Mammary epithelial cell (primary cell): ENCODE measurements at regions of chr3 and their contacts with region 1.

Region 1: DNA sequence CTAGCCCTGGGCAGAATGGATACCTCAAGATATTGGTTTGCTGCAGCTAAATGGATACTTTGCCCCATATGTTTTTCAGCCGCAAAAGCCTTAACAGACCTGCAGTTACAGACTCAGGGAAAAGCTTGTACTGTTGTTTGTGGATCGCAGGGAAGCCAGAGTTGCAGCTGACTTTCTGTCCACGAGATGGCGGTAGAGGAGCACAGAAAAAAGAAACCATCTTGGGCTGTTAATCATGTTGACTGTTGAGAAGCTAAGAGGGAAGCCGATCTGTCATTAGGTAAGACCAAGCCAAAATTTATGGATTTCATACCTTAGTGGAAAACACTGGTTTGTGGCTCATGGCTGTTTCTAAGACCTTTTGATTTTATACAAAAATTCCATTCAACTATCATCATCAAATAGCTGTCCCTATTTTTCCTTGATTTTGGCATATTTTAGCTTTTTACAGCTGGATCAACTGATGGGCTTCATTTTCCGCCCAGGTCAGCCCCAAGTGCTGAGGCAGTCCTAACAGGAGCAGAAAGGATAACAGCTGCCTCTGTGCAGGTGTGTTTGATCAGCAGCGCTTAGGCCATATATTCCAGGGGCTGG is 205.7 kb upstream of the ZPLD1 start:
- DNase-seq: peak; percentile 71
- H3K4me3 ChIP-seq: no peak overlapping the region
- H3K27ac ChIP-seq: no peak overlapping the region
- H3K4me1 ChIP-seq: peaks cover 2% of the 10 kb centered on the region
- H3K27me3 ChIP-seq: no peaks in the 10 kb centered on the region
- CTCF ChIP-seq: peak; percentile 92 to 97

Region 2: DNA sequence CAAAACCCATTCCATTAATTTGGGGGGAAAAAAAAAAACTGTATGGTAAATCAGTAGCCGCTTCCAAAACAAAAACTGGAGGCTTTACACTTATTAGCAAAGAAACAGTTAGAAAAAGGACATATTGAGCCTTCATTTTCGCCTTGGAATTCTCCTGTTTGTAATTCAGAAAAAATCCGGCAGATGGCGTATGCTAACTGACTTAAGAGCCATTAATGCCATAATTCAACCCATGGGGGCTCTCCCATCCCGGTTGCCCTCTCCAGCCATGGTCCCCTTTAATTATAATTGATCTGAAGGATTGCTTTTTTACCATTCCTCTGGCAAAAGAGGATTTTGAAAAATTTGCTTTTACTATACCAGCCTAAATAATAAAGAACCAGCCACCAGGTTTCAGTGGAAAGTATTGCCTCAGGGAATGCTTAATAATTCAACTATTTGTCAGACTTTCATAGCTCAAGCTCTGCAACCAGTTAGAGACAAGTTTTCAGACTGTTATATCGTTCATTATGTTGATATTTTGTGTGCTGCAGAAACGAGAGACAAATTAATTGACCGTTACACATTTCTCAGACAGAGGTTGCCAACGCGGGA is 533.3 kb before region 1 on chr3:
- CTCF ChIA-PET with region 1: no interaction called
- dilution Hi-C with region 1: no loop called
- in situ Hi-C with region 1: no loop called
- intact Hi-C with region 1: loop called (anchors 2 kb)
- DNase-seq: peak; percentile 38
- H3K4me3 ChIP-seq: no peak overlapping the region
- H3K27ac ChIP-seq: no peak overlapping the region
- H3K4me1 ChIP-seq: no peaks in the 10 kb centered on the region
- H3K27me3 ChIP-seq: no peaks in the 10 kb centered on the region
- CTCF ChIP-seq: peak; percentile 45 to 64

Region 3: GRCh38 chr3:101868534-101869464 is 360.4 kb before region 1 on chr3:
- CTCF ChIA-PET with region 1: interaction called, 8 read pairs
- dilution Hi-C with region 1: no loop called
- in situ Hi-C with region 1: no loop called
- intact Hi-C with region 1: loop called (anchors 1 kb)
- DNase-seq: no peak
- H3K4me3 ChIP-seq: no peak overlapping the region
- H3K27ac ChIP-seq: no peak overlapping the region
- H3K4me1 ChIP-seq: peaks cover 7% of the 10 kb centered on the region
- H3K27me3 ChIP-seq: no peaks in the 10 kb centered on the region
- CTCF ChIP-seq: no peak

Region 4: GRCh38 chr3:101995371-101996046 is 233.7 kb before region 1 on chr3:
- CTCF ChIA-PET with region 1: no interaction called
- dilution Hi-C with region 1: no loop called
- in situ Hi-C with region 1: loop called in 1 of 2 experiments (anchors 10 kb)
- intact Hi-C with region 1: loop called (anchors 5 kb)
- DNase-seq: no peak
- H3K4me3 ChIP-seq: no peak overlapping the region
- H3K27ac ChIP-seq: no peak overlapping the region
- H3K4me1 ChIP-seq: peaks cover 30% of the 10 kb centered on the region
- H3K27me3 ChIP-seq: no peaks in the 10 kb centered on the region
- CTCF ChIP-seq: no peak

Region 5: DNA sequence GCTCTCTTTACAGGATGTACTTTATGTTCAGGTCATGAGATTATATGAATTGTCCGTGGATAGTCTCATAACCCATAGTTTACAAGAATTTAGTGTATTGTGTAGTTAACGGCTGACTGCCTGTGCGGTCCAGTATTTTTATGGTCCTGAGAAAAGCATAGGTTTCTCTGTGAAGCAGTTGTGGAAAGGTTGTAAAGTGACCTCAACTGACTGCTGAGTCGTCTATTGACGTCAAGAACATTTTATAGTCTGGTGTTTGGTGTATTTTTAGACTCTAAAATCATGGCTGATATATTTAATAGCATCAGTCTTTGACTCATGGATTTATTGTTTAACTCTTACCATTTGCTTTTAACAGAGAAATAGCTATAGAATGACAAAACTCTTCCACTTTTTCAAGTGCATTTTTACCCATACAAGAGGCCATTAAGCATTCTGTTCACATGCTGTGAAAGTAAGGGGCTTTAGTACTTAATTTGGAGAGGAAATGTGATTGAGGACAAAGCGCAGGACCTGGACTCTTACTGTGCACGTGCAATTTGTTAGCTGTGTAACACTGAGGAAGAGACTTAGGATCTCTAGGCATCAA is 139.2 kb before region 1 on chr3:
- CTCF ChIA-PET with region 1: no interaction called
- dilution Hi-C with region 1: no loop called
- in situ Hi-C with region 1: no loop called
- intact Hi-C with region 1: no loop called
- DNase-seq: peak; percentile 52
- H3K4me3 ChIP-seq: no peak overlapping the region
- H3K27ac ChIP-seq: no peak overlapping the region
- H3K4me1 ChIP-seq: no peaks in the 10 kb centered on the region
- H3K27me3 ChIP-seq: no peaks in the 10 kb centered on the region
- CTCF ChIP-seq: no peak

Region 6: GRCh38 chr3:102156426-102156825 is 72.7 kb before region 1 on chr3:
- CTCF ChIA-PET with region 1: no interaction called
- dilution Hi-C with region 1: loop called (anchors 5 kb)
- in situ Hi-C with region 1: no loop called
- intact Hi-C with region 1: loop called (anchors 2 kb)
- DNase-seq: peak; percentile 97
- H3K4me3 ChIP-seq: no peak overlapping the region
- H3K27ac ChIP-seq: peak overlapping the region; percentile 100
- H3K4me1 ChIP-seq: peaks cover 24% of the 10 kb centered on the region
- H3K27me3 ChIP-seq: no peaks in the 10 kb centered on the region
- CTCF ChIP-seq: no peak

Region 7: GRCh38 chr3:102529452-102529851 is 300.3 kb after region 1 on chr3:
- CTCF ChIA-PET with region 1: interaction called, 7 read pairs
- dilution Hi-C with region 1: no loop called
- in situ Hi-C with region 1: loop called in 1 of 2 experiments (anchors 5 kb)
- intact Hi-C with region 1: loop called (anchors 1 kb)
- DNase-seq: peak; percentile 15
- H3K4me3 ChIP-seq: no peak overlapping the region
- H3K27ac ChIP-seq: no peak overlapping the region
- H3K4me1 ChIP-seq: peaks cover 9% of the 10 kb centered on the region
- H3K27me3 ChIP-seq: no peaks in the 10 kb centered on the region
- CTCF ChIP-seq: peak; percentile 27 to 57

Region 8: GRCh38 chr3:102741108-102741507 is 511.9 kb after region 1 on chr3:
- CTCF ChIA-PET with region 1: no interaction called
- dilution Hi-C with region 1: no loop called
- in situ Hi-C with region 1: no loop called
- intact Hi-C with region 1: loop called (anchors 2 kb)
- DNase-seq: peak; percentile 0
- H3K4me3 ChIP-seq: no peak overlapping the region
- H3K27ac ChIP-seq: no peak overlapping the region
- H3K4me1 ChIP-seq: no peaks in the 10 kb centered on the region
- H3K27me3 ChIP-seq: no peaks in the 10 kb centered on the region
- CTCF ChIP-seq: peak; percentile 18 to 53